Activated CD4-positive, alpha-beta T cell treated with anti-CD3 and anti-CD28 coated beads, Interleukin-2, amount 10 ng/mL, durations not matched to agents 24 days and 14 days (primary cell): ENCODE measurements at regions of chr11 and their contacts with region 1.

Region 1: GRCh38 chr11:83007909-83008580 is 63.7 kb downstream of the RAB30 start:
- DNase-seq: no peak
- H3K4me3 Mint-ChIP-seq: peak overlapping the region; percentile 6
- H3K27ac Mint-ChIP-seq: no peak overlapping the region
- H3K4me1 Mint-ChIP-seq: peaks cover 35% of the 10 kb centered on the region
- H3K27me3 Mint-ChIP-seq: no peaks in the 10 kb centered on the region

Region 2: DNA sequence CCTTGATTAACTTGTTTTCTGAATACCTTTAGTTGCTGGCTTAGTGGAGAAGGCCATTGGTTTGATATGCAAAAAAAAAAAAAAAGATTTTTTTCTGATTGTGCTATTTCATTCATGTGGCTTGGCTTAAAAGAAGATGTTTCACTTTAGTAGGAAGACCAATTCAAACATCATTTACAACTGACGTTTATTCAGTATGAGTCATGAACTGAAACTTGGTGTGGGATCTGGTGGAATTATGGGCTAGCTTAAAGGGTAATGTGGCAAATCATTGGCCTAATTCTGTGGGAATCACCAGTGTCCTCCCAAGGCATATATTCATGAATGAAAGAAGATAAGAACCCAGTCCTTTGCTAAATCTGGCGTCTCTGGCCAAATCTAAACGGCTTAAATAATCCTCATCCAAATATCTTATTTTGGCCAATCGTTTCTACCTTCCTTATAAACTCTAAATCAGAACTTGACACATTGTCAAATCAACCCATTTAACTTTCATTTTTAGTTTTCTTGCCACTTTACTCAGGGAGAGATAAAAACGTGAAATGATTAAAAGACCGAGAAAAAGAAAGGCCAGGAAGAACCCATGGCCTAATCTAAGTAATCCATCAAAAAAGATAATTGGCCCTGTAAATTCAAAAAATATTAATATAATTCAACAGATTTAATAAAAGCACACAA is 29.5 kb before region 1 on chr11:
- intact Hi-C with region 1: loop called (anchors 1 kb)
- DNase-seq: peak; percentile 66
- H3K4me3 Mint-ChIP-seq: peak overlapping the region; percentile 30
- H3K27ac Mint-ChIP-seq: peak overlapping the region; percentile 25
- H3K4me1 Mint-ChIP-seq: peaks cover 27% of the 10 kb centered on the region
- H3K27me3 Mint-ChIP-seq: peaks cover 7% of the 10 kb centered on the region

Region 3: DNA sequence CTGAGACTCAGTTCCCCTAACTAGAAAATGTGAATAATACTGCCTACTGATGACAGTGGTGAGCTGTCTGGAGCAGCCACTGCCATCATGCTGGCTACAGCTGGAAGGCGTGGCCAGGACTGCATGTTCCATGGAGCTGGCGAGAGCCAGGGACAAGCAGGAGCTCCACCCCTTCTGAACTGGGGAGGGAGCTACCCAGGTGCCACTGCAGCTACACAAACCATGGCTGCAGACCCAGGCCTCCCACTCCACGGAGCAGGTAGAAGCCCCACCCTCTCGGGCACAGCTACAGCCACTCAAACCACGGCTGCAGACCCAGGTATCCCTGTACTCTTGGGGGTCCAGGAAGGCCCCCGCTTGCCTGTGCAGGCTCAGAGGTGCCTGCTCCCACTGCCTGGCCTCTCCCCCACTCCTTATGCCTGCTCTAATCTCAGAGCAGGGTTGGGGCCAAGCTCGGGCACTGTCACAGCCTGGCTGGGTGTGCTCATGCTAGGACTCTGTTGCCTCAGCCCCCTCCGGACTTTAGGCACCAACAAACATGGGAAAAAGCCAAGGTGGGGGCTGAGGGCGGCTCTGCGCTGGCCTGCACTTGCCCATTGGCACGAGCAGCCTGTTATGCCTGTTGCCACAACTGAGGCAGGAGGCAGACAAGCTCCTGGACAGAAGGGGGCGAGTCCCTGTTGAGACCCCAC is 12.0 kb after region 1 on chr11:
- intact Hi-C with region 1: no loop called
- DNase-seq: no peak
- H3K4me3 Mint-ChIP-seq: no peak overlapping the region
- H3K27ac Mint-ChIP-seq: no peak overlapping the region
- H3K4me1 Mint-ChIP-seq: peaks cover 12% of the 10 kb centered on the region
- H3K27me3 Mint-ChIP-seq: no peaks in the 10 kb centered on the region

Region 4: GRCh38 chr11:83051760-83052671 is 44.0 kb after region 1 on chr11:
- intact Hi-C with region 1: loop called (anchors 5 kb)
- DNase-seq: no peak
- H3K4me3 Mint-ChIP-seq: no peak overlapping the region
- H3K27ac Mint-ChIP-seq: peak overlapping the region; percentile 16
- H3K4me1 Mint-ChIP-seq: peaks cover 44% of the 10 kb centered on the region
- H3K27me3 Mint-ChIP-seq: no peaks in the 10 kb centered on the region

Region 5: GRCh38 chr11:83071567-83072349 is 63.7 kb after region 1 on chr11 and contains the start of gene RAB30:
- intact Hi-C with region 1: loop called (anchors 1 kb)
- DNase-seq: peak; percentile 98
- H3K4me3 Mint-ChIP-seq: no peak within 1 kb of the TSS
- H3K27ac Mint-ChIP-seq: no peak within 1 kb of the TSS
- H3K4me1 Mint-ChIP-seq: peaks cover 32% of the 10 kb centered on the region
- H3K27me3 Mint-ChIP-seq: no peaks in the 10 kb centered on the region
- total RNA-seq, gene RAB30: 13.6 and 15.4 TPM in 2 replicates